Psoas muscle (tissue), 8 donors: ENCODE measurements at regions of chr15 and their contacts with region 1.

Region 1: DNA sequence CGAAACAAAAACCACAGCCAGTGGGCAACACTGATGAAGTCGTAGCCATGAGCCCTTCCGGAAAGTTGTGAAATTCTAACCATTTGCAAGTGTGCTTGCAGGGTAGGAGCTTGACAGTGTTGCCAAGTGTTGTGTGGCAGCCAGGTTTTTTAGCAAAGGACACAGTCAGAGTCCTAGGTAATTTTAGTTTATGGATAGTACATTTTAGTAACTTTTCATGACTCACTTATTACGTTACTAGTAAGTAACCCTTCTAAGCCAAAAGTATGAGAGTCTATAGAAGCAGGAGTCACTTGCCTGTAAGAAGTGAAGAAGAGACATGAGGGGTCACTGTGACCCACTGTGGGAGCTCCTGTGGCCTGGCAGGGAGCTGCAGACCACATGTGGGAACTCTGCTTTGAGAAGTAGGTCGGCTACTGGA is 54.8 kb upstream of the ADPGK start:
- DNase-seq: peak; percentile 55 to 78
- ATAC-seq: peak; percentile 79 to 85 (median 82)
- H3K4me3 ChIP-seq: no peak overlapping the region
- H3K27ac ChIP-seq: peak overlapping the region; percentile 91
- H3K4me1 ChIP-seq: peaks cover 33% of the 10 kb centered on the region
- H3K27me3 ChIP-seq: no peaks in the 10 kb centered on the region
- CTCF ChIP-seq: no peak

Region 2: GRCh38 chr15:73051811-73052678 is 213.7 kb after region 1 on chr15 and contains the start of gene NEO1:
- intact Hi-C with region 1: loop called in 1 of 2 experiments (anchors 2 kb)
- DNase-seq: peak; percentile 89 to 95
- ATAC-seq: peak; percentile 91 to 95 (median 94)
- H3K4me3 ChIP-seq: peak within 1 kb of the TSS; percentile 79
- H3K27ac ChIP-seq: peak within 1 kb of the TSS; percentile 90
- H3K4me1 ChIP-seq: peaks cover 52% of the 10 kb centered on the region
- H3K27me3 ChIP-seq: no peaks in the 10 kb centered on the region
- CTCF ChIP-seq: no peak
- total RNA-seq, gene NEO1: 22.5 to 33.3 (median 26.0) TPM